Dendritic cell treated with granulocyte-macrophage colony-stimulating factor and Interleukin-4, amounts not matched to agents 40 ng/mL and 50 ng/mL, for 4 days (primary cell): ENCODE measurements at regions of chr3 and their contacts with region 1.

Region 1: DNA sequence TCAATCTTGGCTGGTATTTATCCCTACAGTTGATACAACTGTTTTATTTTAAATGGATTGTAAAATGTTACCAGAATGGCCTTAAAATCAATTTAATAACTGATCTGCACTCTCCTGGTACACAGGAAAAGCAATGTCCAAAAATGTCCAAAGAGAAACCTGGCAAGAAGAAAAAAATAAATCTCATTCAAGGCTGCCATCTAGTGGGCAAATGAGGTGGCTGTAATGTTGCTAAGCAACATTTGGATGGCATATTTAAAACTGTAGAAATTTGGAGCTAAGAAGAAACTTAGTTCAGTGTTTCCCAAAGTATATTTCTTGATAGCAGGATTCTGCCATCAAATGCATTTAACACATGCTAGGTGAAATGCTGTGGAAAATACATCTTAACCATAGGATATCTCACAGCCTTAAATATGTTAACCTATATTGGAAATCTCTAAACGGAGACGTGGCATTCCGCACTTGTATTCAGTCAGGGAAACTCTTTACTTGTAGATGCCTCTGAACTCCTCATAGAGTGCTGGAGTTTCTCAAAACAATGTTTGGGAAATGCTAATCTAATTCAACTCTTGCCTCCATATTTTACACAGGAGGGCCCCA is 216.8 kb downstream of the ERC2 start:
- H3K4me3 Mint-ChIP-seq: no peak overlapping the region
- H3K27ac Mint-ChIP-seq: no peak overlapping the region
- H3K4me1 Mint-ChIP-seq: no peaks in the 10 kb centered on the region
- H3K27me3 Mint-ChIP-seq: peaks cover 4% of the 10 kb centered on the region

Region 2: GRCh38 chr3:54853573-54854404 is 1397.7 kb before region 1 on chr3:
- intact Hi-C with region 1: loop called (anchors 1 kb)
- H3K4me3 Mint-ChIP-seq: no peak overlapping the region
- H3K27ac Mint-ChIP-seq: no peak overlapping the region
- H3K4me1 Mint-ChIP-seq: no peaks in the 10 kb centered on the region
- H3K27me3 Mint-ChIP-seq: peaks cover 7% of the 10 kb centered on the region

Region 3: GRCh38 chr3:55434789-55435188 is 816.7 kb before region 1 on chr3:
- intact Hi-C with region 1: loop called (anchors 5 kb)
- H3K4me3 Mint-ChIP-seq: no peak overlapping the region
- H3K27ac Mint-ChIP-seq: no peak overlapping the region
- H3K4me1 Mint-ChIP-seq: no peaks in the 10 kb centered on the region
- H3K27me3 Mint-ChIP-seq: peaks cover 4% of the 10 kb centered on the region

Region 4: DNA sequence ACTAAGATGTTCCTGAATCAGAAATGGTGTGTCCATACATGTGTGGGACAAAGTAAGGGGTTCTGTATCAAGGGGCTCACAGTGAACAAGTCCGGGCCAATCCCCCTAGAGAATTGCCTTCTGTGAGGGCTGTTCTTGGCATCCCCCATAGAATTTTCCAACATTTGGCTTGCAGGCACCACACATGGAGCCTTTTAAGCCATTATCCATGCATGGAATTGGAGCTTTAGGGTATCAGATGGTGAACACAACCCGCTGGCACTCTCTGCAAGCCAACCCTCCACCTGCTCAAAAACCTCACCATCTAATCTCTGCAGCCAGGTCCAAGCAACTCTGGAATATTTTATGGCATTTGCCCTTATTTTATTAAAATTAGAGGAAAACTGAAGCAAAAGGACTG is 61.9 kb before region 1 on chr3:
- intact Hi-C with region 1: no loop called
- H3K4me3 Mint-ChIP-seq: no peak overlapping the region
- H3K27ac Mint-ChIP-seq: no peak overlapping the region
- H3K4me1 Mint-ChIP-seq: no peaks in the 10 kb centered on the region
- H3K27me3 Mint-ChIP-seq: no peaks in the 10 kb centered on the region

Region 5: GRCh38 chr3:56389183-56389830 is 137.9 kb after region 1 on chr3:
- intact Hi-C with region 1: no loop called
- H3K4me3 Mint-ChIP-seq: no peak overlapping the region
- H3K27ac Mint-ChIP-seq: no peak overlapping the region
- H3K4me1 Mint-ChIP-seq: no peaks in the 10 kb centered on the region
- H3K27me3 Mint-ChIP-seq: no peaks in the 10 kb centered on the region